WTC11 (cell line): ENCODE measurements at regions of chr5 and their contacts with region 1.

Region 1: DNA sequence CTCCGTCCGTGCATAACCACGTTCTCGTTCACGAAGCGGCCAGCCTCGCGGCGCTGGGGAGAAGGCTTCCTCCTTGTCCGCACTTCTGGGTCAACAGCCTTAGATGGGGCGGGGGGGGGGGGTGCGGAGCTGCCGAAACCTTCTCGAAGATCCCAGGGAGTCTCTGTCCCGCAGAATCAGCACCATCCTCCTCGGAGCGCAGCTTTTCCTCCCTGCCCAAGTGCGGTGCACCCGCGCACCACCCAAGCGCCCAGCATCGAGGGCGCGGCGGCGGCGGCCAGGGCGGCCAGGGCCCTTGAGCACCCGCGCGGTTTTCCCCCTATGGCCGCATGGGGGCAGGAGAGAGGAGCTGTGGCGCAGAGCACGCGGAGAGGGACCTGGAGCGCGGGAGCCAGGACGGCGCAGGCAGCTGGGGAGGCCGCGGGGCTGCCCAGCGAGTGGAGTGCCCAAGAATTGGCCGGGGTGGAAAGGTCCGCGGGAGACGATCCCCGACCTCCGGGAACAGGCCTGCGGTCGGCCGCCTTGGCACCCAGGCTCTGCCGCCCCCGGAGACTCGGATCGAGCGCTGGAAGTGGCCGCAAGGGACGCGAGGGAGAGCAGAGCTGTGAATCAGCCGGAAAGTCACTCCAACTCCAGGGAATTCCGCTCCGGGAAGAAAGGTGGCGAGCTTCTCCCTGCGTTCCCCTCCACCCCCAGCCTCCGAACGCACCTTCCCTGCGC is 43.1 kb downstream of the TMEM174 start:
- DNase-seq: peak; percentile 84
- ATAC-seq: peak; percentile 90
- H3K4me3 Mint-ChIP-seq: peak overlapping the region; percentile 64
- H3K27ac Mint-ChIP-seq: no peak overlapping the region
- H3K4me1 Mint-ChIP-seq: peaks cover 23% of the 10 kb centered on the region
- H3K27me3 Mint-ChIP-seq: peaks cover 68% of the 10 kb centered on the region
- CTCF ChIP-seq: peak; percentile 71; the same call in 1 of the 2 replicates

Region 2: GRCh38 chr5:72920690-72921502 is 295.2 kb before region 1 on chr5:
- CTCF ChIA-PET with region 1: interaction called, 12 read pairs
- POLR2A ChIA-PET with region 1: no interaction called
- DNase-seq: no peak
- ATAC-seq: peak; percentile 62
- H3K4me3 Mint-ChIP-seq: no peak overlapping the region
- H3K27ac Mint-ChIP-seq: no peak overlapping the region
- H3K4me1 Mint-ChIP-seq: peaks cover 7% of the 10 kb centered on the region
- H3K27me3 Mint-ChIP-seq: no peaks in the 10 kb centered on the region
- CTCF ChIP-seq: no peak

Region 3: GRCh38 chr5:73135429-73136054 is 80.5 kb before region 1 on chr5:
- CTCF ChIA-PET with region 1: interaction called, 22 read pairs
- POLR2A ChIA-PET with region 1: no interaction called
- DNase-seq: peak; percentile 31
- ATAC-seq: peak; percentile 77
- H3K4me3 Mint-ChIP-seq: no peak overlapping the region
- H3K27ac Mint-ChIP-seq: no peak overlapping the region
- H3K4me1 Mint-ChIP-seq: peaks cover 27% of the 10 kb centered on the region
- H3K27me3 Mint-ChIP-seq: no peaks in the 10 kb centered on the region
- CTCF ChIP-seq: peak; percentile 39; the same call in 1 of the 2 replicates

Region 4: GRCh38 chr5:73201547-73202513 is 14.2 kb before region 1 on chr5:
- CTCF ChIA-PET with region 1: interaction called, 88 read pairs
- POLR2A ChIA-PET with region 1: interaction called, 3 read pairs
- DNase-seq: peak; percentile 96
- ATAC-seq: peak; percentile 99
- H3K4me3 Mint-ChIP-seq: no peak overlapping the region
- H3K27ac Mint-ChIP-seq: no peak overlapping the region
- H3K4me1 Mint-ChIP-seq: peaks cover 9% of the 10 kb centered on the region
- H3K27me3 Mint-ChIP-seq: peaks cover 33% of the 10 kb centered on the region
- CTCF ChIP-seq: peak; percentile 89

Region 5: GRCh38 chr5:73280821-73281746 is 65.0 kb after region 1 on chr5:
- CTCF ChIA-PET with region 1: interaction called, 16 read pairs
- POLR2A ChIA-PET with region 1: no interaction called
- DNase-seq: no peak
- ATAC-seq: no peak
- H3K4me3 Mint-ChIP-seq: no peak overlapping the region; the same call in 1 of the 2 replicates
- H3K27ac Mint-ChIP-seq: no peak overlapping the region
- H3K4me1 Mint-ChIP-seq: peaks cover 35% of the 10 kb centered on the region
- H3K27me3 Mint-ChIP-seq: no peaks in the 10 kb centered on the region; the same call in 1 of the 2 replicates
- CTCF ChIP-seq: no peak

Region 6: DNA sequence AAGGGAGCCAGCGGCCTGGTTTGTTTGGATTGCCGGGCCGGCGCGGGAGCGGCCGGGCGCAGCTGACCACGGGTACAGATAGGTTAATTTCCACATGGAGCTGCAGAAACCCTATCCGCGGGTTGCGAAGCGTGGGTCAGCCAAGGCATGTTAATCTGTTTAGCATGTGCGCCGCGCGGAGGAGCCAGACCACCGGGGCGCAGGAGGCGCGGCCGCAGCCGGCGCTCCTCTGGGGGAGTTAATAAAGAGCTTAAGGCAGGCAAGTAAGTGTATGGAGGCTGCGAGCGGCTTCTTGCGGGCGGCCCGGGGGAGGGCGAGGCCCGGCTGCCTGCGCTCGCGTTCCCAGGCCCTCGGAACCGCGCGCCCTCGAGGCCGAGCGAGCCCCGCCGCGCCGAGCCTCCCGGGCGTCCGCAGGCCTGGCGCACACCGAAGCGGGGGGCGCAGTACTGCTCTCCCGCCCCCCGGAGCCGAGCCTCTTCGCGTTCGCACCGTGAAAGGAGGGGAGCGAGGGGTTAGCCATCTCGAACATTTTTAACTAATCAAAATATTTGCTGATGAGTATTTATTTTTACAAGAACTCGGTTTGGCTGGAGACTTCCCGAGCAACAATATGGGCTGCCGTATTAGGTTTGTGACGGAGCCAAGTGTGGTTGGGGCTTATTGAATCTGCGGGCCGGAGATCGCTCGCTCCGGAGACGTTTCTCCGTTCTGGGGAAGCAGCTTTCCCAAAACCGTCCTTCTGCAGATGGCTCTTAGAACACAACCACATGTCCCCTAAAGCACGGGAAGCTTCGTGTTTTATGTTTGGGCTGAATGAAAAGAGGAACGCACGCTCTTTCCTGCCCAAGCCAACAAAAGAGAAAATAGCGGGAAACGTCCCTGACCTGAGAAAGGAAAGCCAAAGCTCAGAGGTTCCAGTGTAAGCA is 203.7 kb after region 1 on chr5:
- CTCF ChIA-PET with region 1: interaction called, 14 read pairs
- POLR2A ChIA-PET with region 1: no interaction called
- DNase-seq: peak; percentile 52
- ATAC-seq: peak; percentile 68
- H3K4me3 Mint-ChIP-seq: peak overlapping the region; percentile 69
- H3K27ac Mint-ChIP-seq: no peak overlapping the region
- H3K4me1 Mint-ChIP-seq: peaks cover 19% of the 10 kb centered on the region
- H3K27me3 Mint-ChIP-seq: peaks cover 91% of the 10 kb centered on the region
- CTCF ChIP-seq: no peak